ENCODE measurements at regions of chr12 and their contacts with region 1.

Region 1: DNA sequence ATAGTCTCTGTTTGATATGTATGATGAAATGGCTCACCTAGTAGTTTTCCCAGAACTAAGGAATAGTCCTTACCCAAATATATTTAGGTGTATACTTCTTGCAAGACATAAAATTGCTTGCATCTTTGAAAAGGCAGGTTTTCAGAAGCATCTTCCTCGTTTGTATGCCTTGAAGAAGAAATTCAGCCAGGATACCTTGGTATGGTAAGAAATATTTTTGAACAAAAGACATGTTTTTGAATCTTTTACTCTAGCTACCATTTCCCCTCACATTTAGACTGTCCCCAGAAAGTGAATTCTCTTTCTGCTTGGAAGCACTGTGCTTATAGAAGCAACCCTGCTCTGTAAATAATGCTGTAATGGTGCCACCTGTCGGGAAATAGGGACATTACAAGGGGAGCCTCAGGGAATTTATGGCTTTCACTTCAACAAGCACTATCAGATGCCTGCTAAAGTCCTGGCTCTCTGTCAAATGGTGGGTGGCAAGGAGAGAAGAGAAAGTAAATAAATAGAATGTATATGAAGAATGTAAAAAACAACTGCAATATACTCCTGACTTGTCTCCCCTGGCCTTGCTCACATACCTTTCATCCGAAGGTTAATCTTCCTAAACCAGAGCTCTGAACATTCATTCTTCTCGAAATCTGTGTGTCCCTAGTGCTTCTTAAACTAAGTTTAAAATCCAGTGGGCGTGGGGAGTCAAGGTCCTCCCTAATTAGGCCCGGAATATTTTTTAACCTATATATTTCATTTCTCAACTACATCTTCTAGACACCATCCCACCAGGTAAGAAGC is 6.1 kb downstream of the CCDC184 start:
- H3K4me3 ChIP-seq: no peak overlapping the region
- H3K27ac ChIP-seq: no peak overlapping the region
- H3K4me1 ChIP-seq: no peaks in the 10 kb centered on the region
- CTCF ChIP-seq: peak; percentile 29; the same call in 1 of the 2 replicates

Region 2: GRCh38 chr12:48175613-48176416 is 13.7 kb before region 1 on chr12:
- CTCF ChIA-PET with region 1: interaction called, 12 read pairs
- POLR2A ChIA-PET with region 1: no interaction called
- H3K4me3 ChIP-seq: no peak overlapping the region
- H3K27ac ChIP-seq: no peak overlapping the region
- H3K4me1 ChIP-seq: 0 out of 2 replicates have a peak, but pooled peaks cover 2% of the 10 kb centered on the region
- CTCF ChIP-seq: no peak

Region 3: DNA sequence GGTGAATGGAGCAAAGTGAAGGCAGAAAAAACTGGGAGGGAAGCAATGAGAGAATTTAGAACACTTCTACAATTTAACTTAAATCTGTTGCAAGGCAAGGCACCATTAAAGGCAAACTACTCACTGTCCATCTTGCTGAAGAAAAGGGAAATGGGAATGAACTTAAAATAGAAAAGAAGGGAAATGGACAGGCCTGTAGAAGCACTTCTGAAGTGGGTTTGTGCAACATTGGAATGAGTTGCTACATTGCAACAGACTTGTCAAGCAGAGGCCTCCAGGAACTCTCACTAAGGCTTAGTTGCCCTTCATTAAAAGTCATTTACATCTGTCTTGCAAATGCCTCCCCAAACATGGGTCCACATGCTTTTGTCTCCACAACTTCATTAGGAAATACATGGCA is 27.3 kb after region 1 on chr12:
- CTCF ChIA-PET with region 1: no interaction called
- POLR2A ChIA-PET with region 1: no interaction called
- H3K4me3 ChIP-seq: no peak overlapping the region
- H3K27ac ChIP-seq: no peak overlapping the region
- H3K4me1 ChIP-seq: no peaks in the 10 kb centered on the region
- CTCF ChIP-seq: no peak